ENCODE measurements at regions of chr18 and their contacts with region 1.

Region 1: GRCh38 chr18:64017870-64018269 is 48.0 kb downstream of the SERPINB8 start:
- DNase-seq: no peak
- CTCF ChIP-seq: peak; percentile 44

Region 2: DNA sequence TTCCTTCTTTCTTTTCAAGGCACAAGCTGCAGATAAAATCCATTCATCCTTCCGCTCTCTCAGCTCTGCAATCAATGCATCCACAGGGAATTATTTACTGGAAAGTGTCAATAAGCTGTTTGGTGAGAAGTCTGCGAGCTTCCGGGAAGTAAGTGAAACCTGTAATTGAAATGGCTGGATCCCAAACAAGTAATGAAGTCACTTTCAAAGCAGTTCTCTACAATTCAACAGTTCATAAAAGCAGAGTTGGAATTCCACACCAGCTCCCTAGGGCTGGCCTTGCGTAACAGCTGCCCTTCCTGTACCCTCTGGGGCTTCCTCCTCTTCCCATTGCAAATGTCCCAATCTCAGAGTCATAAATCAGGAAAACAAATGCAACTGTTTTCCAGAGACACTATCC is 120.8 kb before region 1 on chr18:
- CTCF ChIA-PET with region 1: no interaction called
- POLR2A ChIA-PET with region 1: no interaction called
- DNase-seq: no peak
- CTCF ChIP-seq: no peak

Region 3: DNA sequence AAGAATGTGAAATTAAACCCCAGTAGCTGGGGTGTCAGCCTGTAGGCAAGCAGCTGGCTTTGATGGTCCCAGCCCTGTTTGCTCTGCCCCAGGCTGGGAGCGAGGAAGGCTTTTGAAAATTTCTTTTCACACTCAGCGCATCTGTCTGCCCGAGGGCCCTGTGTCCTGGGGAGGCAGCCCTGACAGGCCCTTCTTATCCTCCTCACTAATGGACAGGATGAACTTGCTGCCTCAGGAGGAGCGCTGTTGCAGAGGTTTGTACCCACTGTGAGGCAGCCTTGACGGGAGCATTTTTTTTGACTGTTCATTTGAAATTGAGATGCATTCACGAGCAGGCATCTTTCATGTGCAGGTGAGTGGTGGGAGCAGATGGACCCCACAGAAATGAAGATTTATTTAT is 14.4 kb after region 1 on chr18:
- CTCF ChIA-PET with region 1: interaction called, 15 read pairs
- POLR2A ChIA-PET with region 1: no interaction called
- DNase-seq: no peak
- CTCF ChIP-seq: no peak

Region 4: DNA sequence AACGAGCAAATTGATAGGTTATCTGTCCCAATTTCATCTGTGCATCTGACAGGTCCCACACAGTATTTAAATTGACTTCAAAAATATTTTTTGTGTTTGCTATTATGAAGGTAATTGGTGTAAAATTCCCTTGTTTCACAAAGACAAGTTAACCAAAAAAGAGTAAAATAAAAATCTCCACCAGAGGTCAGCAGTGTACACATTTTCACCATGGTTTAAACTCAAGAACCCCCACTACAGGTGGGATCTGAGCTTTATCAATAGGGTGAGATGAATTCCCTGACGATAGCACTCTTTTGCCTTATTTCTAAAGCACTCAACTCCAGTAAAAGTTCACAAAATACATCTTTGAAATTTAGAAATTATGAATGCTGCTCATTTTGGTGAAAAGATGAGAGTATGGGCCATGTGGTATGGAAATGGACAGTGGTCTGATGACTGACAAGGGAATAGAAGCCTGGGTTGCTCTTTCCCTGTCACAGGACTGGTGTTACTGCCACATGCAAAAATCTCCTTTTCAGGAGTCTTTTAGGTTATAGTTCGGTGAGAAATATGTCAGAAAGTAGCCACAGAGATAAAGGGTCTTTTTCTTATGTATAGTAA is 20.0 kb after region 1 on chr18:
- CTCF ChIA-PET with region 1: interaction called, 15 read pairs
- POLR2A ChIA-PET with region 1: no interaction called
- DNase-seq: peak; percentile 38
- CTCF ChIP-seq: peak; percentile 40

Region 5: DNA sequence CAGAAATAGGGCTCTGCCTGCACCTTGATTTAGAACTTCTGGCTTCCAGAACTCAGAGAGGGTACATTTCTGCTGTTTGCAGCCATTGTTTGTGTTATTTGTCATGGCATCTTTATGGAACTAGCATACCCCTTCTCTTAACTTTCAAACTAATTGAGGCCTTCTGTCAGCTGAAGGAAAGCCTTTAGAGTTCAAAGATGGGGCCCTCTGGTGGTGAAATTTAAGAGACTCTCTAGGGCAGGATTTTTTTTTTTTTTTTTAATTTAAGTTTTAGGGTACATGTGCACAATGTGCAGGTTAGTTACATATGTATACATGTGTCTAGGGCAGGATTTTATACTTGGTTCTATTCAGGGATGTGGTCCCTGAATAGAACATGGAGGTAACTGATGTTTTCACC is 391.6 kb after region 1 on chr18:
- CTCF ChIA-PET with region 1: interaction called, 20 read pairs
- POLR2A ChIA-PET with region 1: no interaction called
- DNase-seq: peak; percentile 22
- CTCF ChIP-seq: peak; percentile 46